ENCODE measurements at regions of chr17 and their contacts with region 1.

Region 1: GRCh38 chr17:1122533-1123392 is 57.0 kb downstream of the ABR start:
- DNase-seq: peak; percentile 89
- H3K4me3 ChIP-seq: no peak overlapping the region
- H3K27ac ChIP-seq: peak overlapping the region; percentile 68
- H3K4me1 ChIP-seq: peaks cover 13% of the 10 kb centered on the region
- H3K27me3 ChIP-seq: no peaks in the 10 kb centered on the region
- CTCF ChIP-seq: peak; percentile 89
- POLR2A ChIP-seq: no peak

Region 2: DNA sequence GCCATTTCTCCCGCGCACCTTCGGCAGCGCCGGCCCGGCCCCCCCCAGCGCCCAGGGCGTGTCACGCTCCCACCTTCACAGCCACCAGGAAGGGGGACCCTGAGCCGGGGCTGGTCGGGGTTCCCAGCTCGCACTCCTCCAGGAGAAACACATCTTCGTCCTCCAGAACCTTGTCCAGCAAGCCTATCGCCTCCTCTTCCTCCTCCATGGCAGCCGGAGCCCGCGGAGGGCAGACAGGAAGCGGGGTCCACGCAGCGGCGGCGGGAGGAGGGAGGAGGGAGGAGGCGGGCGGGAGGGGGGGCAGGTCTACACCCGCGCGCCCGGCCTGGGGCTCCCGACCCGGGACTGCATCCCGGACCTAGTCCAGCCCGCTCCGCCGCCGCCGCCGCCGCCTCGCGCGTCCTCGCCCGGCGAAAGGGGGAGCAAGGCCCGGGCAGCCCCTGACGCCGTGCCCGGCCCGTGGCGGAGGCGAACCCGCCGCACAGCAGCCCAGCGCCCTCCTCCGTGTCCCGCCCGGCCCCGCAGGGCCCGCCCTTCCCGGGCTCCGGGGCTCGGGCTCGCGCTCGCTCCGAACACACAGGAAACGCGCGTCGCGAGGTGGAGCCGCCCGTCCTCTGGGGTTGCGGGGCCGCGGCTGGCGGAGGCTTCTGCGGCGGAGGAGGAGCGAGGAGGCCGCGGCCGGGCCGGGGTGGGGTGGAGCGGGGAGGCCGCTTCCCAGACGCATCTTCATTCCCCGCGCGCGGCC is 13.7 kb before region 1 on chr17:
- CTCF ChIA-PET with region 1: interaction called, 40 read pairs
- POLR2A ChIA-PET with region 1: no interaction called
- dilution Hi-C with region 1: no loop called
- intact Hi-C with region 1: no loop called
- DNase-seq: peak; percentile 42
- H3K4me3 ChIP-seq: peak overlapping the region; percentile 64 to 75 (median 72)
- H3K27ac ChIP-seq: peak overlapping the region; percentile 49
- H3K4me1 ChIP-seq: peaks cover 35% of the 10 kb centered on the region
- H3K27me3 ChIP-seq: no peaks in the 10 kb centered on the region
- CTCF ChIP-seq: no peak
- POLR2A ChIP-seq: no peak

Region 3: DNA sequence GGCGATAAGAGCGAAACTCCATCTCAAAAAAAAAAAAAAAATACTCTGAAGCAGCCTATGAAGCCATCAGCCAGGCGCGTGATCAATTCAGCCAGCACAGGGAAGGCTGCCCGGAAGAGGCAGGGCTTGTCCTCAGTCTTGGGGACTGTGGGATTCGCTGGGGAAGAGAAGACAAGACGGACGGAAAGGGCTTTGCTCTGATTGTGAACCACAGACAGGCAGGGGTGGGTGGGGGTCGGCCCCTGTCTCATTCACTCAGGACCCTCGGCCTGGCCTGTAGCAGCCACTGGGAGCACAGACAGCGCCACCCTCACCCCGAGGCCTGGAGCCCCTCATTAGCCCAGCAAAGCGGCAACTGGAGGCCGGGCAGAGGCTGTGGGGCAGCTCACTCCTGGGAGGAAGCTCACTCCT is 19.8 kb after region 1 on chr17:
- CTCF ChIA-PET with region 1: interaction called, 106 read pairs
- POLR2A ChIA-PET with region 1: no interaction called
- dilution Hi-C with region 1: no loop called
- intact Hi-C with region 1: loop called (anchors 1 kb)
- DNase-seq: no peak
- H3K4me3 ChIP-seq: no peak overlapping the region
- H3K27ac ChIP-seq: no peak overlapping the region
- H3K4me1 ChIP-seq: peaks cover 8% of the 10 kb centered on the region
- H3K27me3 ChIP-seq: no peaks in the 10 kb centered on the region
- CTCF ChIP-seq: no peak
- POLR2A ChIP-seq: no peak

Region 4: GRCh38 chr17:1164935-1165556 is 42.3 kb after region 1 on chr17:
- CTCF ChIA-PET with region 1: interaction called, 24 read pairs
- POLR2A ChIA-PET with region 1: no interaction called
- dilution Hi-C with region 1: no loop called
- intact Hi-C with region 1: no loop called
- DNase-seq: peak; percentile 29
- H3K4me3 ChIP-seq: no peak overlapping the region
- H3K27ac ChIP-seq: no peak overlapping the region
- H3K4me1 ChIP-seq: peaks cover 14% of the 10 kb centered on the region
- H3K27me3 ChIP-seq: no peaks in the 10 kb centered on the region
- CTCF ChIP-seq: peak; percentile 11 to 25
- POLR2A ChIP-seq: no peak

Region 5: DNA sequence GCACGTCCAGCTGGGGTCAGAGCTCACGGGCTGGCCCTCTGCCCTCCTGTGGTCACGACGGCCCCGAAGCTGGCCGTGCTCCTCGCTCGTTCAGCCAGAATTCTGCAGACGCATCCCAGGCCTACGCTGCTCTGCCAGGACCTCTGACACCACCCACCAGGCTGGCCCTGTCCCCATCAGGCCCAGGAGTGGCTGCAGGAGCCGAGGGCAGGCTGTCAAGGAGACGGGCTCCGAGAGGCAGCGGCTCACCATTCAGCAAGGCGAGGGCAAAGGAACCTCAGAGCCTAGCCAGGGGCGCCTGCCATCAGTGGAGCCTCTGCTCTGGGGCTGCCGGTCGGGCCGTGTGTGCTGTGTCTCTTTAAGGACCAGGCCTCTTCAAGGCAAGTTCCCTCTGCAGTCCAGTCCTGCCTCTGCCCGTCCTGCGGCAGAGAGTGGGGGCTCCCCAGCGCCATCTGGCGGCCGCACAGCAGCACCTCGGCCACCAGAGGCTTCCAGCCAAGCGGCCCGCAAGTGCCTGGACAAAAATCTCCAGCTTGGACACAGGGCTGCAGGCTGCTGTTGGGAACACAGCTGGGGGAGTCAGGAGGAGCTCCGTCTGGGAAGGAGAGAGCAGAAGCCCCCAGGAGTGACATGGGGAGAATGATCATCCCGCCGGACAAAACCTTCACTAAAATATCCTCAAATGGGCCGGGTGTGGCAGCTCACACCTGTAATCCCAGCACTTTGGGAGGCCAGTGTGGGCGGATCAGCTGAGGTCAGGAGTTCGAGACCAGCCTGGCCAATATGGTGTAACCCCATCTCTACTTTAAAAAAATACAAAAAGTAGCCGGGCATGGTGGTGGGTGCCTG is 64.4 kb after region 1 on chr17:
- CTCF ChIA-PET with region 1: interaction called, 175 read pairs
- POLR2A ChIA-PET with region 1: no interaction called
- dilution Hi-C with region 1: no loop called
- intact Hi-C with region 1: loop called (anchors 1 kb)
- DNase-seq: peak; percentile 84
- H3K4me3 ChIP-seq: no peak overlapping the region
- H3K27ac ChIP-seq: no peak overlapping the region
- H3K4me1 ChIP-seq: peaks cover 3% of the 10 kb centered on the region
- H3K27me3 ChIP-seq: peaks cover 6 to 9% of the 10 kb centered on the region in 2 experiments
- CTCF ChIP-seq: peak; percentile 99 to 100
- POLR2A ChIP-seq: no peak

Region 6: GRCh38 chr17:1260086-1260769 is 137.5 kb after region 1 on chr17:
- CTCF ChIA-PET with region 1: interaction called, 8 read pairs
- POLR2A ChIA-PET with region 1: no interaction called
- dilution Hi-C with region 1: no loop called
- intact Hi-C with region 1: loop called (anchors 2 kb)
- DNase-seq: no peak
- H3K4me3 ChIP-seq: peak overlapping the region in 2 of 3 experiments; percentile 31 to 32
- H3K27ac ChIP-seq: no peak overlapping the region
- H3K4me1 ChIP-seq: no peaks in the 10 kb centered on the region
- H3K27me3 ChIP-seq: peaks cover 2 to 3% of the 10 kb centered on the region in 2 experiments
- CTCF ChIP-seq: no peak
- POLR2A ChIP-seq: no peak

Region 7: DNA sequence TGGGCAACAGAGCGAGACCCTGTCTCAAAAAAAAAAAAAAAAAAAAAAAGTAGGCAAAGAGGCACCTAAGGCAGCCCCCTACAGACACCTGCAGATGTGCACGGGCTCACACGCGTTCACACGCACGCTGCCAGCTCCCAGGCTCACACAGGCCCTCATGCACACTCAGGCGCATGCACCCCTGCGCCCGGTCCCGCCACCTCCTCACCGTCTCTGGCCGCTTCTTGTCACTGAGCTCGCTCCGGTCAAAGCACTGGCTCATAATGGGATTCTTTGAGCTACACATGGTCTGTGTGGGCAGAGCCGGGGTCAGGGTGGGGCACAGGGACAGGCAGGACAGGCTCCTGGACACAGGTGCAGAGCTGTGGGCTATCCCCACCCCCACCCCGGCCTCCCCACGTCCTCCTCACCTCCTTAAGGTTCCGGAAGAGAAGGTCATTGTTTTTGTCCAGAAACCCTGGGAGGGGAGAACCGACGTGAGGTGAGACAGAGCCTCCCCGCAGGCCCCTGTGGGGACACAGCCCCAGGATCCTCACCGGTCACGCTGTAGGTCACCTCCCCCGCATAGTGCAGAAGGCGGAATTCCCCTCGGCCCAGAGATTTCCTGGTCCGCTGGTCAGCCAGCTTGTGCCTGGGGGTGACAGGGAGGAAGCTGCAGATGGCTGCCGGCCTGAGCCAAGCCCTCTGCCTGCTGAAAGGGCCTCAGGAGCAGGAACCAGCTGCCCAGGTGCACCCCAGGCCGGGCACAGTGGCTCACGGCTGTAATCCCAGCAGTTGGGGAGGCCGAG is 351.8 kb after region 1 on chr17:
- CTCF ChIA-PET with region 1: no interaction called
- POLR2A ChIA-PET with region 1: no interaction called
- dilution Hi-C with region 1: no loop called
- intact Hi-C with region 1: no loop called
- DNase-seq: no peak
- H3K4me3 ChIP-seq: no peak overlapping the region
- H3K27ac ChIP-seq: no peak overlapping the region
- H3K4me1 ChIP-seq: no peaks in the 10 kb centered on the region
- H3K27me3 ChIP-seq: no peaks in the 10 kb centered on the region
- CTCF ChIP-seq: no peak
- POLR2A ChIP-seq: no peak